CD8-positive, alpha-beta T cell (primary cell): ENCODE measurements at regions of chr7 and their contacts with region 1.

Region 1: GRCh38 chr7:39948956-39949928 is 814 bp upstream of the CDK13 start:
- DNase-seq: peak; percentile 95 to 100 (median 99)
- ATAC-seq: peak; percentile 74
- H3K4me3 ChIP-seq: peak overlapping the region; percentile 83 to 93
- H3K4me3 Mint-ChIP-seq: peak overlapping the region; percentile 97
- H3K27ac ChIP-seq: peak overlapping the region; percentile 88 to 95
- H3K27ac Mint-ChIP-seq: peak overlapping the region; percentile 99
- H3K4me1 ChIP-seq: peaks cover 27% of the 10 kb centered on the region
- H3K4me1 Mint-ChIP-seq: peaks cover 42% of the 10 kb centered on the region
- H3K27me3 ChIP-seq: no peaks in the 10 kb centered on the region
- H3K27me3 Mint-ChIP-seq: no peaks in the 10 kb centered on the region
- CTCF ChIP-seq: no peak

Region 2: GRCh38 chr7:39566023-39566921 is 383.0 kb before region 1 on chr7 and contains the start of gene YAE1:
- CTCF ChIA-PET with region 1: no interaction called
- POLR2A ChIA-PET with region 1: no interaction called
- intact Hi-C with region 1: loop called (anchors 5 to 10 kb)
- DNase-seq: peak; percentile 60 to 89 (median 81)
- ATAC-seq: peak; percentile 91
- H3K4me3 ChIP-seq: peak within 1 kb of the TSS; percentile 83 to 86
- H3K4me3 Mint-ChIP-seq: peak within 1 kb of the TSS; percentile 99
- H3K27ac ChIP-seq: peak within 1 kb of the TSS; percentile 79 to 80
- H3K27ac Mint-ChIP-seq: peak within 1 kb of the TSS; percentile 99
- H3K4me1 ChIP-seq: peaks cover 9% of the 10 kb centered on the region
- H3K4me1 Mint-ChIP-seq: peaks cover 35% of the 10 kb centered on the region
- H3K27me3 ChIP-seq: no peaks in the 10 kb centered on the region
- H3K27me3 Mint-ChIP-seq: no peaks in the 10 kb centered on the region
- CTCF ChIP-seq: no peak
- total RNA-seq, gene YAE1: 5.2 to 8.8 TPM

Region 3: DNA sequence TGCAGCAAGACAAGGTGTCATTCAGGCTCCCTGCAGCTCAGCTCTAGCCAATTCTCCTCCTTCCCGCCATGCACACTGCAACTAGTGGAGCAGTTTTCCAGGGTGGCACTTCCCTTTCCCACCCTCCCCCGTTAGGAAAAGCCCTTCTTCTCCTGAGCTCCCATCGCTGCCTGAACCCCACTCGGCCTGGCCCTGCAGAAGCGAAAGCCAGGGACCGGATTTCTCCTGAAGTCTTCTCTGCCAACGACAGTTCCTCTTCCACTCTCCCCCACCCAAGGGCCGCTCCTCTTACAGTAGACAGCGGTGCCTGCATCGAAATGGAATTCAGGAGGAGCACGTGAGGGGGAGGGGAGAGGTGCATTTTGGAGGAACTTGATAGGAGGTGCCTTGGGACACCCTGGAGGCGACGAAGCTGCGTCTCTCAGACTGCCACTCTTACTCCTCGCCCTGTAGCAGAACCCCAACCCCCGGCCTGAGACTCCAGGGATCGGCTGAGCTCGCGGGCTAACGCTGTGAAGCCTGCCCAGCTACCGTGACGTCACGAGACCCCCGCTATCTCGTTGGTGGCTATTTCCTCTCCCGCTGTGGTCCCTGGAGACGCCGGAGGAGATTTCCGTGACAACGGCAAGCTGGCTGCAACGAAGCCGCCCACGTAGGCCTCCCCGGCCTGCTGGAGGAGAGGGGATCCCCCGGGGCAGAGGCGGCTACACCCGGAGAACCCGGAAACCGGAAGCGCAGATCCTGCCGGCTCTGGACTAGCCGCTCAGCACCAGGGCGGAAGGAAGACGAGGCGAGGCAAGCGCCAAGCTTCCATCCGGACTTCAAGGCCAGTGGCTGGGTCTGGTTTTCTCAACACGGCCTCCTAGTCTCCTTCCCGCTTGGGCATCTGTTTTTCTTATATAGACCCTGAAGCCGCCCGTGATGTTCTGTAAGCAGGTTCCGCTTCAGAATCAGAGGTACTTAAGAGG is 216.1 kb before region 1 on chr7:
- CTCF ChIA-PET with region 1: no interaction called
- POLR2A ChIA-PET with region 1: interaction called, 3 read pairs
- intact Hi-C with region 1: loop called (anchors 1 kb)
- DNase-seq: peak; percentile 84 to 98 (median 95)
- ATAC-seq: peak; percentile 92
- H3K4me3 ChIP-seq: peak overlapping the region; percentile 79 to 85
- H3K4me3 Mint-ChIP-seq: peak overlapping the region; percentile 91
- H3K27ac ChIP-seq: peak overlapping the region; percentile 66 to 91
- H3K27ac Mint-ChIP-seq: peak overlapping the region; percentile 94
- H3K4me1 ChIP-seq: peaks cover 26% of the 10 kb centered on the region
- H3K4me1 Mint-ChIP-seq: peaks cover 40% of the 10 kb centered on the region
- H3K27me3 ChIP-seq: no peaks in the 10 kb centered on the region
- H3K27me3 Mint-ChIP-seq: no peaks in the 10 kb centered on the region
- CTCF ChIP-seq: no peak

Region 4: GRCh38 chr7:39811161-39811614 is 138.1 kb before region 1 on chr7:
- CTCF ChIA-PET with region 1: no interaction called
- POLR2A ChIA-PET with region 1: no interaction called
- intact Hi-C with region 1: no loop called
- DNase-seq: no peak
- ATAC-seq: no peak
- H3K4me3 ChIP-seq: no peak overlapping the region
- H3K4me3 Mint-ChIP-seq: no peak overlapping the region
- H3K27ac ChIP-seq: no peak overlapping the region
- H3K27ac Mint-ChIP-seq: no peak overlapping the region
- H3K4me1 ChIP-seq: no peaks in the 10 kb centered on the region
- H3K4me1 Mint-ChIP-seq: no peaks in the 10 kb centered on the region
- H3K27me3 ChIP-seq: peaks cover 0 to 4% of the 10 kb centered on the region in 2 experiments
- H3K27me3 Mint-ChIP-seq: peaks cover 20% of the 10 kb centered on the region
- CTCF ChIP-seq: no peak

Region 5: DNA sequence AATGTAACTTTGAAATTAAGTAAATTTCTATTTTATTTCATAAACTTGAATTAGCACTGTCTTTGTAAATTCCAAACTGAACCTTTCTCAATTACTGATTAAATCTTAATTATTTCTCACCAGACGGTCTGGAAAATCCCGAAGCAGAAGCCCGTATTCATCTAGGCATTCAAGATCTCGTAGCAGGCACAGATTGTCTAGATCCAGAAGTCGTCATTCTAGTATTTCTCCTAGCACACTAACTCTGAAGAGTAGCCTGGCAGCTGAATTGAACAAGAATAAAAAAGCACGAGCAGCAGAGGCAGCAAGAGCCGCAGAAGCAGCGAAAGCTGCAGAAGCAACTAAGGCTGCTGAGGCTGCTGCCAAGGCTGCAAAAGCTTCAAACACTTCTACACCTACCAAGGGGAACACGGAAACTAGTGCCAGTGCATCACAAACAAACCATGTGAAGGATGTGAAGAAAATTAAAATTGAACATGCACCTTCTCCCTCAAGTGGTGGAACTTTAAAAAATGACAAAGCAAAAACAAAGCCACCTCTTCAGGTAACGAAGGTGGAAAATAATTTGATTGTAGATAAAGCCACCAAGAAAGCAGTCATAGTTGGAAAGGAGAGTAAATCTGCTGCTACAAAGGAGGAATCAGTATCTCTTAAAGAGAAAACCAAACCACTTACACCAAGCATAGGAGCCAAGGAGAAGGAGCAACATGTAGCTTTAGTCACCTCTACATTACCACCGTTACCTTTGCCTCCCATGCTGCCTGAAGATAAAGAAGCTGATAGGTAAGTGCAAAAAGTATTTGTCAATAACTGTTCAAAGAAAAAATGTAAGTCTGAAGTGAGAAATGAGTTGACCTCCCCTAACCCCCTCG is 38.5 kb after region 1 on chr7:
- CTCF ChIA-PET with region 1: interaction called, 5 read pairs
- POLR2A ChIA-PET with region 1: interaction called, 3 read pairs
- intact Hi-C with region 1: loop called (anchors 1 kb)
- DNase-seq: peak in 6 of 9 experiments; percentile 16 to 72 (median 52)
- ATAC-seq: peak; percentile 87
- H3K4me3 ChIP-seq: no peak overlapping the region
- H3K4me3 Mint-ChIP-seq: peak overlapping the region; percentile 52
- H3K27ac ChIP-seq: peak overlapping the region; percentile 5 to 8
- H3K27ac Mint-ChIP-seq: peak overlapping the region; percentile 79
- H3K4me1 ChIP-seq: peaks cover 34% of the 10 kb centered on the region
- H3K4me1 Mint-ChIP-seq: peaks cover 51% of the 10 kb centered on the region
- H3K27me3 ChIP-seq: no peaks in the 10 kb centered on the region
- H3K27me3 Mint-ChIP-seq: no peaks in the 10 kb centered on the region
- CTCF ChIP-seq: no peak

Region 6: GRCh38 chr7:40134428-40135316 is 185.4 kb after region 1 on chr7 and contains the starts of genes MPLKIP and SUGCT:
- CTCF ChIA-PET with region 1: interaction called, 5 read pairs
- POLR2A ChIA-PET with region 1: interaction called, 14 read pairs
- intact Hi-C with region 1: loop called (anchors 1 kb)
- DNase-seq: peak; percentile 72 to 93 (median 86)
- ATAC-seq: peak; percentile 89
- H3K4me3 ChIP-seq: peak within 1 kb of the TSS; percentile 86 to 98
- H3K4me3 Mint-ChIP-seq: peak within 1 kb of the TSS; percentile 99
- H3K27ac ChIP-seq: peak within 1 kb of the TSS; percentile 85 to 87
- H3K27ac Mint-ChIP-seq: peak within 1 kb of the TSS; percentile 98
- H3K4me1 ChIP-seq: peaks cover 33% of the 10 kb centered on the region
- H3K4me1 Mint-ChIP-seq: peaks cover 41% of the 10 kb centered on the region
- H3K27me3 ChIP-seq: no peaks in the 10 kb centered on the region
- H3K27me3 Mint-ChIP-seq: no peaks in the 10 kb centered on the region
- CTCF ChIP-seq: peak; percentile 90
- total RNA-seq, gene MPLKIP: 11.2 to 13.3 TPM
- total RNA-seq, gene SUGCT: 1.7 to 3.4 TPM